ENCODE measurements at regions of chr13 and their contacts with region 1.

Region 1: DNA sequence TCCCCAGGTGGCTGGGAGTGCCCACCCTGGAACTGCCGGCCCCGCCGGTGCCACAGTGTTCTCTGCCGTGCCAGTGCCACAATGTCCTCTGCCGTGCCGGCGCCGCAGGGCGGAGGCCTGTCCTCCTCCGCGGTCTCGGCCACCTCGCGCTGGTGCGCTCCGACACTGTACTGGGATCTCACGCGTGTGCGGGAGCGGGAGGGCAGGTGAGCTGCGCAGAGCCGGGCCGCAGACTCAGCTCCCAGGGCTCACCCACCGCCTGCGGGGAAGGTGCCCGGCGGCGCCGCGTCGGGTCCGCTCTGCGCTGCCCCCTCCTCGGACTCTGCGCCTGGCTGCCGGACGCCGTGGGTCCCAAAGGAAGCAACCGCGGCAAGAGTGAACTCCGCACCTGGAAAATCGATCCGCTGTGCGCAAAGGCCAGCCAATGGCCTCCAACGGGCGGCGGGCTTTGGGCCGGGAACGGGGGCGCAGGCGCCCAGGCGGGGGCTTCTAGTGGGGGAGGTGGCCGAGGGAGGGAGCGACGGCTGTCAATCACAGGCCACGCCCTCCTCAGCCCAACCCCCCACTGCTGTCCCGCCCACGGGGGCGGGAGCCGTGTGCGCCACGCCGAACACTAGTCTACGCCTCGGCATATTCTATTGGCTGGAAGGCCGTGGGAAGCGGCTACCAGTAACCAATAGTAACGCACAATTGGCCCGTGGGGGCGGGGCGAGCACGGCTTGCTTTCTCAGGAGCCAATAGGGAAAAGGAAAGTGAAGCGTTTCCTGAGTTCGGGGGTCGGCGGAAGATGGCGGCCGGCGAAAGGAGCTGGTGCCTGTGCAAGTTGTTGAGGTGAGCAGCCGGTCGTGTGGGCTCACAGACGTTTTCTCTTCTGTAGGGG is at the start of gene ALG11:
- DNase-seq: peak; percentile 100
- H3K4me3 Mint-ChIP-seq: peak within 1 kb of the TSS; percentile 99
- H3K27ac Mint-ChIP-seq: peak within 1 kb of the TSS; percentile 83
- H3K4me1 Mint-ChIP-seq: peaks cover 9% of the 10 kb centered on the region
- H3K27me3 Mint-ChIP-seq: peaks cover 18% of the 10 kb centered on the region
- total RNA-seq, gene ALG11: 19.0 to 19.5 TPM

Region 2: GRCh38 chr13:51342706-51343105 is 669.2 kb before region 1 on chr13:
- CTCF ChIA-PET with region 1: no interaction called
- POLR2A ChIA-PET with region 1: no interaction called
- intact Hi-C with region 1: no loop called
- DNase-seq: no peak
- H3K4me3 Mint-ChIP-seq: no peak overlapping the region
- H3K27ac Mint-ChIP-seq: no peak overlapping the region
- H3K4me1 Mint-ChIP-seq: no peaks in the 10 kb centered on the region
- H3K27me3 Mint-ChIP-seq: no peaks in the 10 kb centered on the region

Region 3: GRCh38 chr13:51583875-51584730 is 427.8 kb before region 1 on chr13 and contains the start of gene WDFY2:
- CTCF ChIA-PET with region 1: no interaction called
- POLR2A ChIA-PET with region 1: no interaction called
- intact Hi-C with region 1: loop called (anchors 1 kb)
- DNase-seq: peak; percentile 99
- H3K4me3 Mint-ChIP-seq: peak within 1 kb of the TSS; percentile 87
- H3K27ac Mint-ChIP-seq: peak within 1 kb of the TSS; percentile 94
- H3K4me1 Mint-ChIP-seq: peaks cover 35% of the 10 kb centered on the region
- H3K27me3 Mint-ChIP-seq: no peaks in the 10 kb centered on the region
- total RNA-seq, gene WDFY2: 9.3 to 11.2 TPM

Region 4: GRCh38 chr13:51814825-51815650 is 196.8 kb before region 1 on chr13:
- CTCF ChIA-PET with region 1: no interaction called
- POLR2A ChIA-PET with region 1: no interaction called
- intact Hi-C with region 1: loop called (anchors 1 kb)
- DNase-seq: peak; percentile 88
- H3K4me3 Mint-ChIP-seq: peak overlapping the region; percentile 48
- H3K27ac Mint-ChIP-seq: peak overlapping the region; percentile 66
- H3K4me1 Mint-ChIP-seq: peaks cover 67% of the 10 kb centered on the region
- H3K27me3 Mint-ChIP-seq: no peaks in the 10 kb centered on the region

Region 5: DNA sequence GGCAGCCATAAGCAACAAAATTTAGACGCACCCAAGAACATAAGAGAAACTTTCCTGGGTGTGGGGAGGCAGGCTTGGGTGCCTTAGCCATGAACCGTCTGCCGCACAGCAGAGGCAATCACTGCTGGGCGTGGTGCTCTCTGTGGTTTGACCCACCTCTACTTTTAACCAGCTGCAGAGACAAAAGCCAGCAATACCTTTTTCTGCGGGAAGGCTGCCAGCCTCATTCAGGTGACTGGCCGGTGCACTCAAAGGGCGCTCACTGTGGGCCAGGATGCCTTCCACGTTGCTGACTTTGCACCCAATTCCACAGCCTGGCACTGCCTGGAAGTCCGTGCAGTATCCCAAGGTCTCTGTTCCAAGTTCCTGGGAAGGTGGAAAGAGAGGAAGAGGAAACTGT is 69.7 kb before region 1 on chr13:
- CTCF ChIA-PET with region 1: interaction called, 3 read pairs
- POLR2A ChIA-PET with region 1: no interaction called
- intact Hi-C with region 1: loop called (anchors 5 kb)
- DNase-seq: peak; percentile 29
- H3K4me3 Mint-ChIP-seq: no peak overlapping the region
- H3K27ac Mint-ChIP-seq: no peak overlapping the region
- H3K4me1 Mint-ChIP-seq: peaks cover 43% of the 10 kb centered on the region
- H3K27me3 Mint-ChIP-seq: no peaks in the 10 kb centered on the region

Region 6: DNA sequence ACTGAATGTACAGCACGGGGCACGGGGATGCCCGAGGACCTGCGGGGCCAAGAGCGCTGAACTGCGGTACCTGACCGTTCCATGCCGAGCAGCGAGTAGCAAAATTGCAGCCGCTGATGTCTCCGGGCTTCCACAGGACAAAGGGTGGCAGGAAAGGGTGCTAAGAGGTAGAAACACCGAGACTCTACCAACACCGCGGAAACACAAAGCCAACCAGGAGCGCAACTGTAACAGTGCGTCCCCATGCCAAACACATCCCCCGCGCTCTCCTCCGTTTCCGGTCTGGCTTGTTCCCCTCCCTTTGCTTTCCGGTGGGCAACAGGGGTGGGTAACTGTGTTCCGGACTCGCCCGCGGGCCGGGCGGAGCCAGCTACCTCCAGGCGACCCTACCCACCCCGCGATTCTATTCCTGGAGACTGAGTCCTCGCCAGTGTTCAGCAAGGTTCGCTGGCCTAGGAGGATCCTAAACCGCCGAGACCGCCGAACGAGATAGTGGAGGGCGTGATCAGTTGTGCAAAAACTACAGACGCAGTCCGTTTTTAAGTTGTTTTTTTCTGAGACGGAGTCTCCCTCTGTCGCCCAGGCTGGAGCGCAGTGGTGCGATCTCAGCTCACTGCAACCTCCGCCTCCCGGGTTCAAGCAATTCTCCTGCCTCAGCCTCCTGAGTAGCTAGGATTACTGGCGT is 182.5 kb after region 1 on chr13:
- CTCF ChIA-PET with region 1: interaction called, 3 read pairs
- POLR2A ChIA-PET with region 1: no interaction called
- intact Hi-C with region 1: loop called (anchors 1 kb)
- DNase-seq: peak; percentile 93
- H3K4me3 Mint-ChIP-seq: peak overlapping the region; percentile 97
- H3K27ac Mint-ChIP-seq: peak overlapping the region; percentile 91
- H3K4me1 Mint-ChIP-seq: peaks cover 22% of the 10 kb centered on the region
- H3K27me3 Mint-ChIP-seq: no peaks in the 10 kb centered on the region